ENCODE measurements at regions of chr1 and their contacts with region 1.

Region 1: DNA sequence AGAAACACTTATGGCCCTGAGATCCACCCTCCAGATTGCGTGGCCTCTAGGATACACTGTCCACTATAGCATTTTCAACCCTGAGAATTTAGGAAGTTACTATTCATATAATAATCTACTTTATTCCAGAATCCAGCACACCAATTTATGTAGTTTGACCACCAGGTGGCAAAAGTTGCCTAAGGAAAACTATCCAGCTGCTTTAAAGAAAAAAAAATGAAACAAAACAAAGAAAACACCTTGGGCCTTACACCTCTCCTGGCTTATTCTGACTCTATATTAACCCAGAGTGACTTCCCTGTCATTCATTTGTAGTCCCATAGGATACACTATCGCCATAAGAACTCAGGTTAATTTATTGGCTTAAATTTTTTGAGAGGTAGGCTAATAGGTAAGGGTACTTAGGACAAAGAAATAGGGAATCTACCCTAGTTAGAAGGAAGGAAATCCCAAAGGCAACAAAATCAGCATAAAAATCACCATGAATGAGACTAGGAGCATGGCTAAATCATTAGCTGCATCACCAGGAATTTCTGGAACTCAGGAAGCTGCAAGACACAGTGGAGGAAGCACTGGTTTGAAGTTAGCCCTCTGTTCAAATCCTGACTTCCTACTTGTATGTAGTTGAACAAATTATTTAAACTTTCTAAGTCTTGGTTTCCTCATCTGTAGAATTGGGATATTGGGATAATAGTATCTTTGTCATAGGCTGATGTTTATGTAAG is 107.5 kb downstream of the SPAG17 start:
- DNase-seq: peak in 2 of 4 experiments; percentile 13 to 45
- ATAC-seq: peak; percentile 63
- H3K4me3 ChIP-seq: no peak overlapping the region
- H3K27ac ChIP-seq: no peak overlapping the region
- H3K4me1 ChIP-seq: no peaks in the 10 kb centered on the region
- H3K27me3 ChIP-seq: no peaks in the 10 kb centered on the region
- CTCF ChIP-seq: peak; percentile 29 to 60 (median 56); a peak in 4 of 6 replicates
- EP300 ChIP-seq: no peak
- POLR2A ChIP-seq: no peak
- RAD21 ChIP-seq: peak; percentile 53 to 63; a peak in 3 of 4 replicates

Region 2: GRCh38 chr1:117815926-117816325 is 261.6 kb before region 1 on chr1:
- CTCF ChIA-PET with region 1: no interaction called
- POLR2A ChIA-PET with region 1: no interaction called
- in situ Hi-C with region 1: no loop called
- intact Hi-C with region 1: loop called (anchors 10 kb)
- DNase-seq: peak; percentile 28 to 44 (median 36)
- ATAC-seq: peak; percentile 91
- H3K4me3 ChIP-seq: no peak overlapping the region
- H3K27ac ChIP-seq: no peak overlapping the region
- H3K4me1 ChIP-seq: no peaks in the 10 kb centered on the region
- H3K27me3 ChIP-seq: peaks cover 0 to 17% of the 10 kb centered on the region in 2 experiments; a peak in 2 of 5 replicates
- CTCF ChIP-seq: peak; percentile 66 to 75 (median 67)
- EP300 ChIP-seq: no peak
- POLR2A ChIP-seq: no peak
- RAD21 ChIP-seq: peak; percentile 61 to 87

Region 3: GRCh38 chr1:117981455-117982192 is 95.9 kb before region 1 on chr1:
- CTCF ChIA-PET with region 1: no interaction called
- POLR2A ChIA-PET with region 1: no interaction called
- in situ Hi-C with region 1: no loop called
- intact Hi-C with region 1: no loop called
- DNase-seq: no peak
- ATAC-seq: no peak
- H3K4me3 ChIP-seq: no peak overlapping the region
- H3K27ac ChIP-seq: no peak overlapping the region
- H3K4me1 ChIP-seq: no peaks in the 10 kb centered on the region
- H3K27me3 ChIP-seq: peaks cover 0 to 6% of the 10 kb centered on the region in 2 experiments; a peak in 1 of 5 replicates
- CTCF ChIP-seq: no peak
- EP300 ChIP-seq: no peak
- POLR2A ChIP-seq: no peak
- RAD21 ChIP-seq: no peak

Region 4: DNA sequence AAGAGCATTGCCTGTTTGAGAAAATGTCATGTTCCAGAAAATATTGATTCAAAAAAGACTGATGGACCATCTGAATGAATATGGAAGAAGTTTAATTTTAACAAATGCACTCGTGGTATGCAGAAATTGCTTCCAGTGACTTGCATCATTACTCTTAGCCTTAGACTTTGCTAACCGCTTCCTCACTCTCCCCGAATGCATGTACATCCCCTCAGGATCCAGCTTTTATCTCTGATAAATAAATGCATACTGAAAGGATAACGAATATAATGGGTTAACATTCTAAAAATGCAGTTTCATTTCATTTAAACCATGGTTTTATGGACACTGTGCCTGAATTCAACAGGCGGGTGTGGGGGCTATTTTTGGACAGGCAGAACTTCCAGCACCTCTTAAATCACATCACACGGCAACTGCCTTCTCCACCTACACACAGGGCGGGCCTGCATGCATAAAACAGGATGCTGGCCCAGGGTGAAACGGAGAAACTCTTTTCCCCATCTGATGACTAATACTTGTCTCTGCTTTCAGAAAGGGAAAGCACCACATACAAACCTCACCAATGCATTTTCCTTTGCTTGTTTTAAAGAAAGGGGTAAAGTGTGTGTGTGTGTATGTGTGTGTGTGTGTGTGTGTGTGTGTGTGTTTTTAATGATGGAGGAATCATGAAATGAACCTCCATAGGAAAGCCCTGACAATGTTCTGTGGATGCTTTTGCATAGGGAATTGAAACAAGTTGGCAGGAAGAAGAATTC is 58.9 kb after region 1 on chr1:
- CTCF ChIA-PET with region 1: no interaction called
- POLR2A ChIA-PET with region 1: no interaction called
- in situ Hi-C with region 1: no loop called
- intact Hi-C with region 1: no loop called
- DNase-seq: no peak
- ATAC-seq: no peak
- H3K4me3 ChIP-seq: no peak overlapping the region
- H3K27ac ChIP-seq: no peak overlapping the region
- H3K4me1 ChIP-seq: no peaks in the 10 kb centered on the region
- H3K27me3 ChIP-seq: no peaks in the 10 kb centered on the region
- CTCF ChIP-seq: no peak
- EP300 ChIP-seq: no peak
- POLR2A ChIP-seq: no peak
- RAD21 ChIP-seq: no peak